Right ventricle myocardium superior (tissue), 1 donor: ENCODE measurements at regions of chr12 and their contacts with region 1.

Region 1: DNA sequence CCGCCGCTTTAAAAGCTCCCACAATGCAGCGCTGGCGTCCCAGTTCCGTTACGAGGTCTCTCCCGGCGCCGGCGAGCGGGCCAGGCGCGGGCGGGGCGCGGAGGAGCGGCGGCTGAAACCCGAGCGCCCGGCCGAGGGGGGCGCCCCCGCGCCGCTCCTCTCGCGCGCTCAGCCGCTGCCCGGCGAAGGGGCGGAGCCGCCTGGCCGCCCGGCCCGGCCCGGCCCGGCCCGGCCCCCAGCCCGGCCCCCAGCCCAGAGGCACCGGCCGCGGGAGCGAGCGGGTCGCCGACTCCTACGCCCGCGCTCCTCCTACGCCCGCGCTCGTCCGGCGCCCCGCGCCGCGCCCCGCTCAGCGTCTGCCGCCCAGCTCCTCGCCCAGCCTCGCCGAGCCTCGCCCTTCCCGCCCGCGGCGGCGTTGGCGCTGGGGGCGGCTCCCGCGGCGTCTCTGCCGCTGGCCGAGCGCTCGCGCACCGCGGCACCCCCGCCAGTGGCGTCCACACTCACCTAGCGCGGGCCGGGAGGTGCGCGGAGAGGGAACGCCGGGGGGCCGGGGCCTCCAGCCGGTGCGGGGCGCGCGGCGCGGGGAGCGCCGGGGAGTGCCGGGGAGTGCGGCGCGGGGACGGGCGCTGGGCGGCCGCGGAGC is at the start of gene RASSF8:
- DNase-seq: peak; percentile 87
- ATAC-seq: peak; percentile 95
- total RNA-seq, gene RASSF8: 26.7 TPM

Region 2: DNA sequence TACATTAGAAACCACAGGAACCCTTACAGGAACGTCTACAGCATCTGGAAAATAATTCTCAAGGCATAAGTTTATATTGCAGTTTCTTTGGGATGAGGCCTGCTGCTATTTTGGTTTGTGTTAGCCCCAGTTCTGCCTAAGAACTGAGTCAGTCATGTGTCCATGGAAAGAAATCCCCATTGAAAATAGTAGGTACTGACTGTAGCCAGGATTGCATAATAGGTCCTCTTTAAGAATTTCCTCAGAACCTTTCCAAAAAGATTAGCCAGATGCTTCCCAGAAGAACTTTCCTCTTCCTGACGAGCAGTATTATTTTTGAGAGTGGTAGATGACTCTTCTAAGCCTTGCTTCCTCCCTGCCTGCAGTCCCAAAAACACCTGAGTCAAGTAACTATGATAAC is 52.5 kb after region 1 on chr12:
- intact Hi-C with region 1: loop called (anchors 5 kb)
- DNase-seq: no peak
- ATAC-seq: peak; percentile 94

Region 3: DNA sequence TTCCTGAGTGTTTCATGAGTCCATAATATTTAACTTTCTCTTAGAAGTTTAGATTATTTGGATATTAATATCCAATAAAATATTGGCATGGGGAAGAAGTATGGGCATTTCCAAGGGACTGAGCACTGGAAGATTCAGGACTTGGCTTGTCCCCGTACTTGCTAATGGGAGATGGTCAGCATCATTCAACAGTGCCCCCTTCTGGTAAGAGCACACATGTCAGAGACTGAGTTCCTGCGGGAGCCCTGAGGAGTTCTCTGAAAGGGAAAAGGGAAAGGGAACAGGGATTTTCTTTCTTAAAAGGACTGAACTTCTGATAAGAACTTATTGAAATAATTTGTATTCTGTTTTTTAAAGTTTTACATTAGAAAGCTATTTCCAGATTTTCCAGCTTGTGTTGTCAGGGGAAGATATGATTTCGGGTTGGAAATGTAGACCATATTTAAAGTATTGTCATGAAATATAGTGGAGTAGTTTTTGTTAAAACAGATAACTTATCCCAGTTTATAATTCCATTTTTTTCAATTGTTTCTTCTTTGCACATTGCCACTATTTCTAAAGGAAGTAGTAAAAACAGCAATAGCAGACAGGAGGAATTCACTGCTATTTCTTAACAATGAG is 1183.7 kb after region 1 on chr12:
- intact Hi-C with region 1: no loop called
- DNase-seq: no peak
- ATAC-seq: peak; percentile 94